ENCODE measurements at regions of chr3 and their contacts with region 1.

Region 1: DNA sequence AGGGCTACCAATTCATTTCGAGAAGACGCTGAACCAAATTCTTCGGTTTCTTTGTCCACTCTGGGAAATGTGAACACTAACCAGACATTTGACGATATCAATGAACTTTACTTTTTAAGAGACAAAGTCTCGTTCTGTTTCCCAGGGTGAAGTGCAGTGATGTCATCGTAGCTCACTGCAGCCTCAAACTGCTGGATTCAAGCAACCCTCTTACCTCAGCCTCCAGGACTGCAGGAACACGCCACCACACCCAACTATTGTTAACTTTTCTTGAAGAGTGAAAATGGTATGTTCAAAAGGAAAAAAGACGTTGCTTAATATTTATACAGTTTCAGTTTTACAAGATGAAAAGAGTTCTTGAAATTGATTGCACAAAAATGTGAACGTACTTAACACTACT is 30.6 kb downstream of the MB21D2 start:
- DNase-seq: no peak
- H3K4me3 Mint-ChIP-seq: peak overlapping the region; percentile 54
- H3K27ac Mint-ChIP-seq: peak overlapping the region; percentile 69
- H3K4me1 Mint-ChIP-seq: peaks cover 82% of the 10 kb centered on the region
- H3K27me3 Mint-ChIP-seq: peaks cover 2% of the 10 kb centered on the region

Region 2: DNA sequence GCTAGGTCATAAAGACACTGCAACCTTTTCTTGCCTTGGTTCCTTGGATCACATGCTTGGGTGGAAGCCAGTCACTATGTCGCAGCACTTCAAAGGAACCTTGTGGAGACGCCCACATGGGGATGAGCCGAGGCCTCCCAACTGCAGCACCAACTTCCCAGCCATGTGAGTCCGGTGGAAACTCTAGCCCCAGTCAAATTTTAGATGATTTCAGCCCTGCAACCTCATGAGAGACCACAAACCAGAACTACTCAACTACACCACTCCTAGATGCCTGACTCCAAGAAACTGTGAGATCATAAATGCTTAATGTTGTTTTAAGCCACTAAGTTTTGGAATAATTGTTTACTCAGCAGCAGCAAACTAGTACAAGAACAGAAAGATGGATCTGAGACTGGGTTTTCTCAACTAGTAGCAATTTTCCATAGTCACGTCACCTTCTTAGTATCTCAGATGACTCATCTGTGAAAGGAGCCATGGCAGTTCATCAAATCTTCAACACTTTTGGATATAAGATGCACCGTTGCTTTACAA is 55.9 kb before region 1 on chr3:
- intact Hi-C with region 1: loop called (anchors 1 kb)
- DNase-seq: peak; percentile 15
- H3K4me3 Mint-ChIP-seq: peak overlapping the region; percentile 25
- H3K27ac Mint-ChIP-seq: peak overlapping the region; percentile 88
- H3K4me1 Mint-ChIP-seq: peaks cover 67% of the 10 kb centered on the region
- H3K27me3 Mint-ChIP-seq: no peaks in the 10 kb centered on the region

Region 3: DNA sequence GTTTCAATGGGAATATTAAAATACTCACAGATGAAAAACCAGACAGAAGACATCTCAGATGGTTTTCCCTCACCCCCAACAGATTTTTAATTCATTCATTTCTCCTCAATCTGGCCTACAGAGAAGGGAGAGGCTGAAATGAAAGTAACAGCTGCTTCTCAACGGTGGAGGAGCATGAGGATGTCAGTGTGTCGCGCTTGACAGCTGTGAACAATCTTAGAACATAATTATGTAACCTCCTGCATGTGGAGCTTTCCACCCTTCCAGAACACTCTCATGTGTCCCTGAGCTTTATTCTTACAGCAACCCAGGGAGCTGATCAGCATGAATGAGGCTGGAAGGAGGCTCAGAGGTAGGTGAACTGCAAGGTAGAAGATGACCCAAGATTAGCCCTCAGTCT is 22.1 kb before region 1 on chr3:
- intact Hi-C with region 1: no loop called
- DNase-seq: no peak
- H3K4me3 Mint-ChIP-seq: no peak overlapping the region
- H3K27ac Mint-ChIP-seq: peak overlapping the region; percentile 49
- H3K4me1 Mint-ChIP-seq: peaks cover 64% of the 10 kb centered on the region
- H3K27me3 Mint-ChIP-seq: no peaks in the 10 kb centered on the region

Region 4: DNA sequence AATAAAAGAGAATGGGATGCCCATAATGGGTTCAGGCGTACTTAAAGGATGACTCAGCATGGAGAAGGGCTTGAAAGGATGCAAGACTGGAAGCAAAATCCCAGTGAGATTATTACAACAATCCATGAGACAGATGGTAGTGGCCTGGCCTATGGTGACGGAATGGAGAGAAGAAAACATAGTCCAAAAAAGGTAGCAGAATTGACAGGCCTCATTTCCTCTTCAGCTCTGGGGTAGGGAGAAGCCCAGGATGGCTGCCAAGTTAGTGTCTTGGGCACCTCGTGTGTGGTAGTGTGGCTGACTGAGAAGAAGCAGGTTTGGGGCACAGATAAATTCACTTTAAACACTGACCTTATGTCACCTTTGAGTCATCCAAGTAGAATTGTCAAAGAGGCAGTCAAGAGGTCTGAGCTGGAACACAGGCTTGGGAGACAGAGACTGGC is 12.5 kb after region 1 on chr3:
- intact Hi-C with region 1: loop called (anchors 1 kb)
- DNase-seq: no peak
- H3K4me3 Mint-ChIP-seq: peak overlapping the region; percentile 41
- H3K27ac Mint-ChIP-seq: peak overlapping the region; percentile 79
- H3K4me1 Mint-ChIP-seq: peaks cover 74% of the 10 kb centered on the region
- H3K27me3 Mint-ChIP-seq: no peaks in the 10 kb centered on the region